Activated naive CD4-positive, alpha-beta T cell treated with anti-CD3 and anti-CD28 coated beads for 36 hours (primary cell): ENCODE measurements at regions of chr10 and their contacts with region 1.

Region 1: GRCh38 chr10:72248468-72249151 is 25.1 kb upstream of the DDIT4 start:
- DNase-seq: peak; percentile 87
- H3K4me3 Mint-ChIP-seq: peak overlapping the region; percentile 75
- H3K27ac Mint-ChIP-seq: peak overlapping the region; percentile 92
- H3K4me1 Mint-ChIP-seq: peaks cover 78% of the 10 kb centered on the region
- H3K27me3 Mint-ChIP-seq: no peaks in the 10 kb centered on the region

Region 2: GRCh38 chr10:72229261-72230251 is 19.1 kb before region 1 on chr10:
- CTCF ChIA-PET with region 1: interaction called, 3 read pairs
- intact Hi-C with region 1: loop called (anchors 1 kb)
- DNase-seq: no peak
- H3K4me3 Mint-ChIP-seq: no peak overlapping the region
- H3K27ac Mint-ChIP-seq: peak overlapping the region; percentile 27
- H3K4me1 Mint-ChIP-seq: peaks cover 39% of the 10 kb centered on the region
- H3K27me3 Mint-ChIP-seq: no peaks in the 10 kb centered on the region